ENCODE measurements at regions of chr20 and their contacts with region 1.

Region 1: DNA sequence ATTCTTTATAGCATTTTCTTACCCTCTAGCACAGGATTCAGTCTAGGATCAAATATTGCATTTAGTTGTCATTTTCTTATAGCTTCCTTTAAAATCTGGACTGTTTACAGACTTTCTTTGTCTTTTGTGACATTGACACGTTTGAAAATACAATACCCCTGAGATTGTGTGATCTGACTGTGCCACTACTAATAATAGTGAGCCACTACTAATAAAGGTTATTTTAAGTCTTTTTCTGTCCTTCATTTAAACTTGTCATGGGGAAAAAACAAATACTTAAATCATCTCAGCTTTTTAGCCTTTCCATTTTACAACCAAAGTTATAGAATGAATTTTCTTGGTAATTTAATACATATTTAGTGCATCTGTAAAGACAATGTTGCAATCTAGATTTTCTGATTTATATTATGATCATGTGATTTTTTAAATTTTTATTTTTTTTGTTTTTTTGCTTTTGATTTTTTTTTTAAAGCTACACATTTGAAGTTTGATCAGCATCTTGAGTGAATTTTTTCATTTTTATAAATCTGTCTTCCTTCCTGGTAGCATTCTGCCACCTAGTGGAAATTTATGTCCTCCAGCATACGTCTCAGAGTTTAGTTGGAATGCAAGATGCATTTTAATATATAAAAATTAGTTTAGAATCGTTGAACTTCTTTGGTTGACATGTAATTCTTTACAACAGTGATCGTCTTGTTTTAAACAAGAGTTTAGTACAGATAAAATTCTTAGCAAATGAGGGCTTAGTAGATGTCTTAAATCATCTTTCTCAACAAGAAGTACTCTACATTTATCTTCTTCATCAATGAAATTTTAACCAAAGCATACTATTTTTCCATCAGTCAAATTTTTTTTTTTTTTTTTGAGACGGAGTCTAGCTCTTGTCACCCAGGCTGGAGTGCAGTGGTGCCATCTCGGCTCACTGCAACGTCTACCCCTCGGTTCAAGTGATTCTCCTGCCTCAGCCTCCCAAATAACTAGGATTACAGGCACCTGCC is 119.4 kb downstream of the NCOA3 start:
- DNase-seq: peak; percentile 27
- CTCF ChIP-seq: peak; percentile 74

Region 2: GRCh38 chr20:47600967-47601547 is 20.1 kb before region 1 on chr20:
- CTCF ChIA-PET with region 1: interaction called, 11 read pairs
- POLR2A ChIA-PET with region 1: no interaction called
- DNase-seq: no peak
- CTCF ChIP-seq: no peak

Region 3: GRCh38 chr20:47610247-47610944 is 10.7 kb before region 1 on chr20:
- CTCF ChIA-PET with region 1: interaction called, 26 read pairs
- POLR2A ChIA-PET with region 1: no interaction called
- DNase-seq: peak; percentile 69
- CTCF ChIP-seq: no peak